HepG2 (cell line): ENCODE measurements at regions of chr12 and their contacts with region 1.

Region 1: GRCh38 chr12:94593822-94594442 is 56.4 kb downstream of the TMCC3 start:
- DNase-seq: no peak
- ATAC-seq: no peak
- H3K4me3 ChIP-seq: no peak overlapping the region
- H3K27ac ChIP-seq: no peak overlapping the region
- H3K4me1 ChIP-seq: no peaks in the 10 kb centered on the region
- H3K27me3 ChIP-seq: peaks cover 0 to 8% of the 10 kb centered on the region in 2 experiments; a peak in 3 of 5 replicates
- CTCF ChIP-seq: no peak
- EP300 ChIP-seq: no peak
- POLR2A ChIP-seq: no peak
- RAD21 ChIP-seq: no peak

Region 2: GRCh38 chr12:94516985-94517384 is 76.9 kb before region 1 on chr12:
- CTCF ChIA-PET with region 1: no interaction called
- POLR2A ChIA-PET with region 1: no interaction called
- in situ Hi-C with region 1: no loop called
- intact Hi-C with region 1: no loop called
- DNase-seq: peak; percentile 64
- ATAC-seq: peak; percentile 81
- H3K4me3 ChIP-seq: no peak overlapping the region
- H3K27ac ChIP-seq: no peak overlapping the region
- H3K4me1 ChIP-seq: peaks cover 14% of the 10 kb centered on the region
- H3K27me3 ChIP-seq: no peaks in the 10 kb centered on the region; a peak in 1 of 5 replicates
- CTCF ChIP-seq: no peak
- EP300 ChIP-seq: no peak
- POLR2A ChIP-seq: no peak
- RAD21 ChIP-seq: no peak

Region 3: DNA sequence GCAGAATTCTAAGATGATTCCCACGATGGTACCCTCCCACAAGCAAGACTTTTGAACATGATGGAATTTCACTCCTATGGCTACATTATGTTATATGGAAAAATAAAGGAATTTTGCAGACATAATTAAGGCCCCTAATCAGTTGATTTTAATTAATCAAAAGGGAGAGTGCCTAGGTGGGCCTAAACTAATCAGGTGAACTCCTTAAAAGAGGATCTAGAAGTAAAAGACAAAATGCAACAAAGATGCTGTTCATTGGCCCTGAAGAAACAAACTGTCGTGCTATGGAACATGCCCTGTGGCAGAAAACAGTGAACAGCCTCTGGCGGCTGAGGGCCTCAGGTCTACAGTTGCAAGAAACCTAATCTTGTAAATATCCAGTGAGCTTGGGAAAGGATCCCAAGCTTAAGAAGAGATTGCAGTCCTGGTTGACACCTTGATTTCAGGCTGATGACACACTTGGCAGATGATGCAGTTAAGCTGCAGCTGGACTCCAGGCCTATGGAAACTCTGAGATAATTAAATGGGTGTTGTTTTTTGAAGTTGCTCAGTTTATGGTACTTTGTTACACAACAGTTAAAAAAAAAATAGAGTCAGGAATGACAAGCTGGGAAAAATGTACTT is 42.6 kb after region 1 on chr12:
- CTCF ChIA-PET with region 1: no interaction called
- POLR2A ChIA-PET with region 1: no interaction called
- in situ Hi-C with region 1: no loop called
- intact Hi-C with region 1: loop called (anchors 5 kb)
- DNase-seq: no peak
- ATAC-seq: no peak
- H3K4me3 ChIP-seq: no peak overlapping the region
- H3K27ac ChIP-seq: no peak overlapping the region
- H3K4me1 ChIP-seq: peaks cover 6% of the 10 kb centered on the region; the same call in 1 of the 2 replicates
- H3K27me3 ChIP-seq: no peaks in the 10 kb centered on the region; a peak in 2 of 5 replicates
- CTCF ChIP-seq: no peak
- EP300 ChIP-seq: no peak
- POLR2A ChIP-seq: no peak
- RAD21 ChIP-seq: no peak

Region 4: GRCh38 chr12:94725375-94726168 is 131.6 kb after region 1 on chr12:
- CTCF ChIA-PET with region 1: no interaction called
- POLR2A ChIA-PET with region 1: no interaction called
- in situ Hi-C with region 1: no loop called
- intact Hi-C with region 1: no loop called
- DNase-seq: peak; percentile 23
- ATAC-seq: peak; percentile 65
- H3K4me3 ChIP-seq: no peak overlapping the region
- H3K27ac ChIP-seq: no peak overlapping the region
- H3K4me1 ChIP-seq: no peaks in the 10 kb centered on the region
- H3K27me3 ChIP-seq: no peaks in the 10 kb centered on the region
- CTCF ChIP-seq: peak; percentile 38
- EP300 ChIP-seq: no peak
- POLR2A ChIP-seq: no peak
- RAD21 ChIP-seq: no peak

Region 5: DNA sequence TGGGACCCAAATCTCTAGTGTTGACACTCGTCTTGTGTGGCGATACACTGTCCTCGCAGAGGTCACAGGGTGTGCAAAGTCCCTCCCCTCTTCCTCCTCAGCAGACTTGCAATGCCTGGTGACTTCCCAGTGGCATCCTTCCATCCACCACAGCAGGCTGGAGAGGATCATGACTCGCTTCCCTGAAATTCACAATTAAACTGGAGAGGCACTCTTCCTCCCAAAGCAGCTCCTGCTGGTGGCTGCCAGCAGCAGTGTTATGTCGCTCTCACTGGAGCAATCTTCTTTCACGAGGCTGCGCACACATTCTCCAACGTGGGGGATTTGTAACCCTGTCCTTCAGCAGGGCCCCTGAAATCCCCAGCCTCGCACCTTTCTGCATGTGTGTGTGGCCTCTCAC is 201.6 kb after region 1 on chr12:
- CTCF ChIA-PET with region 1: no interaction called
- POLR2A ChIA-PET with region 1: no interaction called
- in situ Hi-C with region 1: no loop called
- intact Hi-C with region 1: no loop called
- DNase-seq: no peak
- ATAC-seq: no peak
- H3K4me3 ChIP-seq: no peak overlapping the region
- H3K27ac ChIP-seq: no peak overlapping the region
- H3K4me1 ChIP-seq: no peaks in the 10 kb centered on the region
- H3K27me3 ChIP-seq: peaks cover 0 to 8% of the 10 kb centered on the region in 2 experiments; a peak in 1 of 5 replicates
- CTCF ChIP-seq: no peak
- EP300 ChIP-seq: no peak
- POLR2A ChIP-seq: no peak
- RAD21 ChIP-seq: no peak